Mammary epithelial cell (primary cell): ENCODE measurements at regions of chr1 and their contacts with region 1.

Region 1: GRCh38 chr1:186212544-186213226 is 162.4 kb downstream of the TPR start:
- DNase-seq: peak; percentile 74
- H3K4me3 ChIP-seq: no peak overlapping the region
- H3K27ac ChIP-seq: no peak overlapping the region
- H3K4me1 ChIP-seq: peaks cover 22% of the 10 kb centered on the region
- H3K27me3 ChIP-seq: no peaks in the 10 kb centered on the region
- CTCF ChIP-seq: peak; percentile 90 to 92

Region 2: DNA sequence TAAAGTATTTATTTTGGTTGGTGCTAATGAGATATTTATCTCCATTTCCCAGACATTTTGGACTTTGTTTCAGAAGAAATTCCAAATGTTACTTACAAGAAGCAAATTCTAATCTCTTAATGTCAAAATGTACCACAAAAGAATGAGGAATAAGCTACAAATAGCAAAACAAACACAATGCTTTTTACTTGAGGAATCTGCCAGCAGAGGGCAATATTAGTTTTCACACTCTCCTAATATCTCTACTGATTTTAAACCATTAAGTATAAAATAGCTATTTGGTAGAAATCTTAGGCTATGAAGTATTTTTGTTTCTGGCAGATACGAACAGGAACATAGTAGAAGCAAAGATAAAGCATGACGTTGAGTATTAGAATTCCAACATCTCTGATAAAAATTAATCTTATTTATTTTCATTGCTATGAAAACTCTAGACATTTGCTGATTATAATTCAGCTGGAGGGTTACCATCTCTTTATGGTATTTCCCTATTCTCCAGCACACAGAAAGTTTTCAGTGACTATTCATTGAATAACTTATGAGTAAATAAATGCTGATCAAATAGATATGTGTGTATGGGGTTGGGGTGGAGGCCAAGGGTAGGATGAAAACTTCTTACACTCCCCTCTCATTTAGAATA is 491.9 kb before region 1 on chr1:
- CTCF ChIA-PET with region 1: no interaction called
- dilution Hi-C with region 1: no loop called
- in situ Hi-C with region 1: loop called in 1 of 2 experiments (anchors 25 kb)
- intact Hi-C with region 1: loop called (anchors 1 kb)
- DNase-seq: peak; percentile 28
- H3K4me3 ChIP-seq: no peak overlapping the region
- H3K27ac ChIP-seq: peak overlapping the region; percentile 86
- H3K4me1 ChIP-seq: peaks cover 24% of the 10 kb centered on the region
- H3K27me3 ChIP-seq: no peaks in the 10 kb centered on the region
- CTCF ChIP-seq: peak; percentile 63 to 65

Region 3: GRCh38 chr1:185960422-185961321 is 252.0 kb before region 1 on chr1:
- CTCF ChIA-PET with region 1: no interaction called
- dilution Hi-C with region 1: no loop called
- in situ Hi-C with region 1: no loop called
- intact Hi-C with region 1: loop called (anchors 1 kb)
- DNase-seq: no peak
- H3K4me3 ChIP-seq: no peak overlapping the region
- H3K27ac ChIP-seq: no peak overlapping the region
- H3K4me1 ChIP-seq: peaks cover 13% of the 10 kb centered on the region
- H3K27me3 ChIP-seq: no peaks in the 10 kb centered on the region
- CTCF ChIP-seq: no peak

Region 4: GRCh38 chr1:186139701-186140100 is 73.0 kb before region 1 on chr1:
- CTCF ChIA-PET with region 1: no interaction called
- dilution Hi-C with region 1: loop called (anchors 10 kb)
- in situ Hi-C with region 1: no loop called
- intact Hi-C with region 1: no loop called
- DNase-seq: peak; percentile 5
- H3K4me3 ChIP-seq: no peak overlapping the region
- H3K27ac ChIP-seq: no peak overlapping the region
- H3K4me1 ChIP-seq: no peaks in the 10 kb centered on the region
- H3K27me3 ChIP-seq: no peaks in the 10 kb centered on the region
- CTCF ChIP-seq: no peak

Region 5: DNA sequence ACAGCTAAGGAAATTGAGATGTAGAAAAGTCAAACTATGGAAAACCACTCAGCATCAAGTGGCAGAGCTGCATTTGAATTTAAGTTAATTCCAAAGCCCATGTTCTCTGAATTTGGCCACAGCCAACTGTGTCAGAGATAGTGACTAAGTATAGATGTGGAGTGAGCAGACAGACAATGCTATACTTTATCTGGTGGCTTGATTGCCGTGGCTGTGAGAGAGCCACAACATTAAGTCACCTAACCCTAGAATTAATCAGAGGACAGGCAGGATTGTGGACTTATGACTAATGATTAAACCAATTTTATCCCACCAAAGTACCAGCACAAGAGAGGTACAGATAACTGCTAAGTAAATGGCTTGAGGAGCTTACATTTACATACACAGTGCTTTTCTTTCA is 47.4 kb before region 1 on chr1:
- CTCF ChIA-PET with region 1: no interaction called
- dilution Hi-C with region 1: no loop called
- in situ Hi-C with region 1: no loop called
- intact Hi-C with region 1: loop called (anchors 2 kb)
- DNase-seq: peak; percentile 75
- H3K4me3 ChIP-seq: no peak overlapping the region
- H3K27ac ChIP-seq: peak overlapping the region; percentile 22
- H3K4me1 ChIP-seq: peaks cover 12% of the 10 kb centered on the region
- H3K27me3 ChIP-seq: no peaks in the 10 kb centered on the region
- CTCF ChIP-seq: no peak